ENCODE measurements at regions of chr1 and their contacts with region 1.

Region 1: GRCh38 chr1:86704458-86704971 is at the start of gene SH3GLB1:
- DNase-seq: peak; percentile 92
- H3K4me3 ChIP-seq: peak within 1 kb of the TSS; percentile 71 to 93 (median 83)
- H3K27ac ChIP-seq: peak within 1 kb of the TSS; percentile 93 to 98 (median 98)
- H3K4me1 ChIP-seq: peaks cover 0 to 43% (median 39%) of the 10 kb centered on the region in 4 donors
- H3K27me3 ChIP-seq: no peaks in the 10 kb centered on the region
- CTCF ChIP-seq: peak; percentile 47 to 91 (median 77)
- EP300 ChIP-seq: no peak
- POLR2A ChIP-seq: peak; percentile 35 to 53
- total RNA-seq, gene SH3GLB1: 50.8 to 67.0 (median 56.7) TPM

Region 2: DNA sequence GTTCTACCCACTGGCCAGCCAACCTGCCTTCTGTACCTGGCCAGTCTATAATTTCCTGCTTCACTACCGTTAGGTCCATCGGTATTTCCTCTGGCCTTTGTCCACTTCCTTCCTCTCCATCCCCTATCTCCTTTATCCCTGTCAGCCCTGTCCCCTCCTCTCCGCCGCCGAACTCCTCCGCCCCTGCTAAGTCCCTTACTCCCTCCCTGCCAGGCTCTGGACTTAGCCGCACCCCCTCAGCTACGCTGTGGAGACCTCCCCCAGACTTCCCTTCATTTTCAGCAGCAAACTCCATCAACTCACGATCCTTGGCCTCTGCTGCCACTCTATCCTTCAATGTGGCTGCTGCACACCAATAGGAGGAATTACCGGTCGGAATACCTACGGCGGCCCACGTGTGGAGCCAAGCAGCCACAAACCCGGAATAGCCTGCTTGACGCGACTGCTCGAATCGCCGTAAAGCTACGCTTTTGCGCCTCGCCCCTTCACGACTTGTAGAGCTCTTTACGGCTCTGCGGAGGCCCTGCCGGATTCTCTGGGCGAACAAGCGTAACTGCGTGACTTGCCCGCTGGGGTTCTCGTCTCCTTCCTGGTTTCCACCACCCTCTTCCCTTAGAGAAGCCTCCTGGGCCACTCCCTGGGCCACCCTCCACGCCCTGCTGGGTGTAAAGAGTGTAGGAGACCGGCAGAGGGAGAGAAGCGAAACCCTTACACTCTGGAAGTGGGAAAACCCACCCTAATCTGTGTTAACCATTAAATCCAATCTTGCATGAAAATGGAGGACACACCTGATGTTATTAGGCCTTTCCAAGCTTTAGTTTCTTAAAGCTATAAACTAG is 996.3 kb before region 1 on chr1 and contains the start of gene ZNHIT6:
- intact Hi-C with region 1: no loop called
- DNase-seq: peak; percentile 94
- H3K4me3 ChIP-seq: peak within 1 kb of the TSS; percentile 62 to 74 (median 70)
- H3K27ac ChIP-seq: peak within 1 kb of the TSS; percentile 78 to 86 (median 82)
- H3K4me1 ChIP-seq: peaks cover 0 to 23% (median 16%) of the 10 kb centered on the region in 4 donors
- H3K27me3 ChIP-seq: no peaks in the 10 kb centered on the region
- CTCF ChIP-seq: peak in 3 of 4 experiments; percentile 13 to 41 (median 35)
- EP300 ChIP-seq: no peak
- POLR2A ChIP-seq: peak in 1 of 2 donors; percentile 16
- total RNA-seq, gene ZNHIT6: 12.5 to 20.0 (median 15.8) TPM

Region 3: DNA sequence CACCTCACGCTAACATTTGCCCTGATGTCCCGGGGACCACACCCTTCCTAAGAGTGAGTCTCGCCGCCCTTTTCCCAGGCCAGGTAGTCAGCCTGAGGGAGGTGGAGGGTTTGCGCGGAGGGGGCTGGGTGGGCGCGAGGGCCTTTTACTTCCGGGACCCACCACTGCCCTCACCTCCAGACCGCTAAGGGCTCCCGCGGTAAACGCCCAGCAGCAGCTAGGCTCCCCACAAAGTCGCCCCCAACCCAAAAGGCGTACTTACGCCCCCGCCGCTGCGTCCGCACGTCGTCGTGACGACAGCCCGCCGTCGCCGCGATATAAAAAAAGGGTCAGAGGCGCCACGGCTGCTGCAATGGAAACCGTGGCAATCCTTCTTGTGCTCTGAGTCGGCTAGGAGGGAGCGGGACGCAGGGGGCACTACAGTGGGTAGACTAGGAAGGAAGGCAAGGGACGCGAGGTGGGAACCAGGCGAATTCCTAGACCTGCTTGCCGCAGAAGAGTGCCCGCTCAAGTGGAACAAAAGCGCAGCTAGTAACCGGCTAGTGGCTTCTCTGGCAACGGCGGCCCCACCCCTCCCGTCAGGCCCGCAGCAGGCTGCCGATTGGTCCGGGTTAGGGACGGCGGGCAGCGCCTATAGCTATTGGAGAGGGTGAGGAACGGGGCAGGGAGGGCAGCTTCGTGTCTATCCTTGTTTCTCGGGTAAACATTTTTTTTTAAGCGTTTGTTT is 308.6 kb before region 1 on chr1 and contains the start of gene ODF2L:
- intact Hi-C with region 1: loop called (anchors 10 kb)
- DNase-seq: peak; percentile 95
- H3K4me3 ChIP-seq: peak within 1 kb of the TSS; percentile 67 to 88 (median 78)
- H3K27ac ChIP-seq: peak within 1 kb of the TSS; percentile 71 to 85 (median 78)
- H3K4me1 ChIP-seq: peaks cover 0 to 25% (median 12%) of the 10 kb centered on the region in 4 donors
- H3K27me3 ChIP-seq: no peaks in the 10 kb centered on the region
- CTCF ChIP-seq: no peak
- EP300 ChIP-seq: no peak
- POLR2A ChIP-seq: peak; percentile 42 to 49
- total RNA-seq, gene ODF2L: 27.8 to 55.1 (median 30.2) TPM

Region 4: DNA sequence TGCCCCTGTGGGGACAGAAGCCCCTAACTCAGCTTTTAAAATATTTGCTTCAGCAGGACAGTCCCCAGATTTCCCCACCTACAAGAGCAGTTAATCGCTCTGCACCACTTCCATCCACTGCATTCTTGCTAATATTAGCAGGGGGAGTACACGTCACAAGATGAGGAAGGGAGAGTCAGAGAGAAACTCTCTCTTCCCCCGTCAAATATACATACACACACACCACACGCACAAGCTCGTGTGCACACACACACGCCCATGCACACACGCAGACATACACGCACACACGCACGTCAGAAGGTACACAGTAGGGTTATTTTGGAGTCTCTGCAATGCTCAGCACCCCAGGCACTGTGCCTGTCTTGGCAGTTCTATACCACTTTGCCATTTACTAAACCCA is 233.7 kb before region 1 on chr1:
- intact Hi-C with region 1: loop called (anchors 10 kb)
- DNase-seq: no peak
- H3K4me3 ChIP-seq: no peak overlapping the region
- H3K27ac ChIP-seq: no peak overlapping the region
- H3K4me1 ChIP-seq: no peaks in the 10 kb centered on the region
- H3K27me3 ChIP-seq: no peaks in the 10 kb centered on the region
- CTCF ChIP-seq: no peak
- EP300 ChIP-seq: no peak
- POLR2A ChIP-seq: no peak

Region 5: GRCh38 chr1:86499987-86500593 is 204.4 kb before region 1 on chr1:
- intact Hi-C with region 1: loop called (anchors 10 kb)
- DNase-seq: no peak
- H3K4me3 ChIP-seq: no peak overlapping the region
- H3K27ac ChIP-seq: peak overlapping the region in 3 of 4 donors; percentile 76 to 87 (median 85)
- H3K4me1 ChIP-seq: peaks cover 0 to 51% (median 43%) of the 10 kb centered on the region in 4 donors
- H3K27me3 ChIP-seq: no peaks in the 10 kb centered on the region
- CTCF ChIP-seq: peak; percentile 5 to 67 (median 52)
- EP300 ChIP-seq: no peak
- POLR2A ChIP-seq: no peak

Region 6: GRCh38 chr1:86596741-86597290 is 107.7 kb before region 1 on chr1:
- intact Hi-C with region 1: no loop called
- DNase-seq: no peak
- H3K4me3 ChIP-seq: no peak overlapping the region
- H3K27ac ChIP-seq: no peak overlapping the region
- H3K4me1 ChIP-seq: no peaks in the 10 kb centered on the region
- H3K27me3 ChIP-seq: no peaks in the 10 kb centered on the region
- CTCF ChIP-seq: no peak
- EP300 ChIP-seq: no peak
- POLR2A ChIP-seq: no peak

Region 7: DNA sequence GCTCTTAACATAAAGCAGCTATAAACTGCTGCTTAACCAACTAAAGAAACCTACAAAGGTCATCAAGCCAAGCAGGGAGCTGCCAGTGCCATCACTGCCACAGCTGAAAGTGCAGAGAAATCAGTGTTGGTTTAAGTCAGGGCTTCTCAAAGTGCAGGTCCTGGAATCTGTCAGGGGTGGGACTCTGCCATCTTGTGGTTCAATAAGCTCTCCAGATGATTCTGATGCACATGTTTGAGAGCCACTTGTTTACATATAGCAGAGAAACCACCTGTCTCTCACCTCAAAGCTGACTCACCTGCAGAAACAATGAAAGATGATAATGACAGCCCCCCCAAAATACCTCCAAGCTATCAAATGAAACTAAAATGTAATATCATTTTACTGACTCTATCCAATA is 49.2 kb after region 1 on chr1:
- intact Hi-C with region 1: no loop called
- DNase-seq: no peak
- H3K4me3 ChIP-seq: no peak overlapping the region
- H3K27ac ChIP-seq: no peak overlapping the region
- H3K4me1 ChIP-seq: peaks cover 0 to 13% (median 9%) of the 10 kb centered on the region in 4 donors
- H3K27me3 ChIP-seq: no peaks in the 10 kb centered on the region
- CTCF ChIP-seq: no peak
- EP300 ChIP-seq: no peak
- POLR2A ChIP-seq: no peak

Region 8: GRCh38 chr1:86913896-86914634 is 209.6 kb after region 1 on chr1 and contains the start of gene SELENOF:
- intact Hi-C with region 1: loop called (anchors 10 kb)
- DNase-seq: peak; percentile 99
- H3K4me3 ChIP-seq: peak within 1 kb of the TSS; percentile 78 to 98 (median 87)
- H3K27ac ChIP-seq: peak within 1 kb of the TSS; percentile 89 to 94 (median 91)
- H3K4me1 ChIP-seq: peaks cover 0 to 36% (median 19%) of the 10 kb centered on the region in 4 donors
- H3K27me3 ChIP-seq: no peaks in the 10 kb centered on the region
- CTCF ChIP-seq: no peak
- EP300 ChIP-seq: no peak
- POLR2A ChIP-seq: no peak
- total RNA-seq, gene SELENOF: 66.7 to 110 (median 84.1) TPM

Measured in sigmoid colon (tissue), 7 donors.